ENCODE measurements at regions of chr11 and their contacts with region 1.

Region 1: DNA sequence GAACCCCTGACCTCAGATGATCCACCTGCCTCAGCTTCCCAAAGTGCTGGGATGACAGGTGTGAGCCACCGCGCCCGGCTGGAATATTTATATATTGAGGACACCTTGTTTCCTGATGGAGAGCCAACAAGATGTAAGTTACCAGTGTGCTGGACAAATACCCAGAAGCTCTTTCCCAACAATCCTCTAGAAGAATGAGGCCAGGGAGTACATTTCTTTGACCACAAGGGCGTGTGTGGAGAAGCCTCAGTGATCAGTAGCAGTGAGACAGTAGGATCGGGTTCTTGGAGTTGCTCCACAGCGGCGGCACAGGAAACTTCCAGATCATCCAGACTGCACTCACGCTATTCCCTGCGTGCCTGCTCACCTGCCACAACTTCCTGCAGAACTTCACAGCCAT is 10.3 kb upstream of the POLA2 start:
- DNase-seq: no peak
- H3K4me3 Mint-ChIP-seq: no peak overlapping the region
- H3K27ac Mint-ChIP-seq: no peak overlapping the region
- H3K4me1 Mint-ChIP-seq: peaks cover 2% of the 10 kb centered on the region
- H3K27me3 Mint-ChIP-seq: peaks cover 5% of the 10 kb centered on the region

Region 2: DNA sequence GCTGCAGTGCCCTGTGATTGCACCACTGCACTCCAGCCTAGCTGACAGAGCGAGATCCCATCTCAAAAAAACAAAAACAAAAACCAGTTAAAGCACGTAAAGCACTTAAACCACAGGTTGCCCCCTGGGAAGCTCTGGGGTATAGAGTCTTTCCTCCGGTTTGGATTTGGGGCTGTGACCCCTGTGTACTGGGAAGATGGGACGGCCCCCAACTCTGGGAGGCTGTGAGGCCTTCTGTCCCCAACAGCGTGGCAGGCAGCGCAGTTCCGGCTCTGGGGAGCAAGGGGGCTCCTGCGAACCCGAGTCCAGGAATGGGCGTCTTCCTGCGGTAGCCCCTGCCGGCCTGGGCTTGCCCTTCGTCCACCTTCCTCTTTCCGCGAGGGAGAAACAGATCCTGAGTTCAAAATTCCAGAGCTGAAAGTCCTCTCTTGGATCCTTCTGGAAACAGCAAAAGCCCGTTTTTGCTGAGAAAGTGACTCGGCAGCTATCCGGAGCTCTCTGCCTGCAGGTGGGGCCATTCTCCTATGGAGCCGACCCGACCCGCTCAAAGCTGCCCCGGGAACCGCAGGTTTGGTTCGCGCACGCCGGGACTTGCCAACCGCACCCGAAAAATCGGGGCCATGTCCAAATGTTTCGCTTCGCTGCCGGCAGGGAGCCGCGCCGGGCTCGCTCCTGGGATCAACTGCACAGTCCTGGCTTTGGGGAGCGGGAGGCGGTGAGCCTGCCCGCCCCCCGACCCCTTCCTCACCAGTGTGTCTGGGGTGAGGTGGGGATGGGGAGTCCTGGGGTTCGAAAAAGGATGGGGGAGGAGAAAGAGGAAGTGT is 26.0 kb before region 1 on chr11:
- CTCF ChIA-PET with region 1: interaction called, 15 read pairs
- POLR2A ChIA-PET with region 1: no interaction called
- intact Hi-C with region 1: no loop called
- DNase-seq: peak; percentile 76
- H3K4me3 Mint-ChIP-seq: peak overlapping the region; percentile 72
- H3K27ac Mint-ChIP-seq: no peak overlapping the region
- H3K4me1 Mint-ChIP-seq: peaks cover 7% of the 10 kb centered on the region
- H3K27me3 Mint-ChIP-seq: peaks cover 24% of the 10 kb centered on the region

Region 3: DNA sequence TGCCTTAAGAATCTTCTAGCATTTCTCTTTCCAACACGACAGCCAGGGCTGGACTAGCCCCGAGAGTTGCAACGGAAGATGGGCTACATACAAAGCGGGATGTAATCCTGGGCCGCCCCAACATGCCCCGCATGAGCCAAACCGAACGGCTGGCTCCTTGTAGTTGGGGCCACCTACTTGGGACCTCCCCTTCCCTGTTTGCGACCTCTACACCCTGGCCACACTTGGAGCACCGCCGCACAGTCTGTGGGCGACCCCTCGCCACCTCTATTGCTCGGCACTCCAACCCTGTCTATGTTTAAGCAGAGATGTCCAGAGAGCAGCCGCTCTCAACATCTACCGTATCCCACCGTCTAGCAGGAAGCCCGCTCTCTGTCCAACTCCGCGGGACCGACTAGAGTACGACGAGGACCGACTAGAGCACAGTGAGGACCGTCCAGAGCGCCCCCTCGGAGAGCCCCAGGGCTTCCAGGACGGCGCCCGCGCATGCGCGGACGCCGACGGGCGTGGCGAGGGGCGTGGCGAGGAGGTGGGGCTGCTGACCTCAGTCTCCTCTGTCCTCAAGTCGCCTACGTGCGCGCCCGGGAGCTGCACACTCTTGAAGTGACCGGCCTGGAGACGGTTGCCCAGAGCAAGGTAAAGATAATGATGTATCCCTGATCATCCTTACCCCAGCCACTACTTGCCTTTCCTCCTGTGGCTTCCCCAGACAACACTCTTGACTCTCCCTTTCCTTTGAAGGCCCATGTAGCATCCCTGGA is 203.4 kb after region 1 on chr11:
- CTCF ChIA-PET with region 1: no interaction called
- POLR2A ChIA-PET with region 1: no interaction called
- intact Hi-C with region 1: no loop called
- DNase-seq: peak; percentile 92
- H3K4me3 Mint-ChIP-seq: peak overlapping the region; percentile 91
- H3K27ac Mint-ChIP-seq: peak overlapping the region; percentile 79
- H3K4me1 Mint-ChIP-seq: peaks cover 41% of the 10 kb centered on the region
- H3K27me3 Mint-ChIP-seq: no peaks in the 10 kb centered on the region

Measured in activated CD4-positive, alpha-beta memory T cell treated with anti-CD3 and anti-CD28 coated beads for 36 hours (primary cell).